Kidney (tissue), 22 donors: ENCODE measurements at regions of chr3 and their contacts with region 1.

Region 1: GRCh38 chr3:24773798-24774197 is 279.1 kb upstream of the THRB start:
- DNase-seq: peak; percentile 73 to 90 (median 79)
- H3K4me3 ChIP-seq: no peak overlapping the region
- H3K27ac ChIP-seq: no peak overlapping the region
- H3K4me1 ChIP-seq: no peaks in the 10 kb centered on the region
- H3K27me3 ChIP-seq: no peaks in the 10 kb centered on the region
- CTCF ChIP-seq: peak; percentile 88

Region 2: DNA sequence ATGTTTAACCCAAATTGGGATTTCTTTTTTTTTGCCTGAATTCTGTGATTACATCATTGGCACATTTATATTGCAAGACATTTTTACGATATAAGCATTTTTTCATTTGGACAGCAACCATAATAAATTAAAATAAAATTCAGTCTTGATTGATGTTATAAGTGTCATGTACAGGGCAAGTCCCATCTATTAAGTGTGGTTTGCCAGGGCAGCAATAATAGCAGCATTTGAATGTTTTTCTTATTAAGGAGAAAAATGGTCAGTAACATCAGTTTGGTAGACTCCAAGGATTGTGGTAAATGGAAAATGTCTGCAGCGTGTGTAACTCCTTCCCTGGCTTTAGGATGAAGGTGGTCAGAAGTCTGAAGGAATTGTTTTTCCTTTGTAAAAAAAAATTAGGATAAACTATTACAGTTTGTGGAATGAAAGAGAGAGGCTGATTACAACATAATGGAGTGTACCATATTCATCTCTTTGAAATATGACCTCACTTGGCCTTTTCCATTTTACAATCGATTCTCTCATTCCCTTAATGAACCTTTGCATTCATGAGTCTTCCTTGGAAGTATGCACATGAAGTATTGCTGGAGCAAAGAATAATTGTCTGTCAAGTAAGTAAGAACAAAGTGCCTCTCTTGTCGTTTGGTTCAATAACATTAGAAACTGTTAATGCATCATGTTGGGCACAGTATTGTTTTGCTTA is 126.3 kb after region 1 on chr3:
- intact Hi-C with region 1: no loop called
- DNase-seq: no peak
- H3K4me3 ChIP-seq: no peak overlapping the region
- H3K27ac ChIP-seq: no peak overlapping the region
- H3K4me1 ChIP-seq: no peaks in the 10 kb centered on the region
- H3K27me3 ChIP-seq: no peaks in the 10 kb centered on the region
- CTCF ChIP-seq: no peak

Region 3: DNA sequence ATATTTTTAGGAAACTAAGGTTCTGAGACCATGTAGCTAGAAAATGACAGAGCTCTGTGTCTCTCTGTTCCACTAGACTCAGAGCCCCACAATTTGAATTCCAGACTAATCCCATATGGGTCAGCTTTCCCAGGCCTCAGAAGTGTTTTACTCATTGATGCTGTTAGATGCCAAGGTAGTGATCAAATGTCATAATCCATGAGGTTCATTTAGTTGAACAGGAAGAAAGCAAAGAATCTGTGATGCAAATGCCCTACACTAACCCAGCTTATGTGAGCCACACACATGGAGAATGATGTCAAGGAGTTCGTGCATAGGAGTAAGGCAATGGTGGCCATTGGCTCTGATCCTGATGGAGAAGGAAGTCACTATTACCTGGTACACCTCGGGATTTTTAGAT is 290.9 kb after region 1 on chr3:
- intact Hi-C with region 1: no loop called
- DNase-seq: no peak
- H3K4me3 ChIP-seq: no peak overlapping the region
- H3K27ac ChIP-seq: no peak overlapping the region
- H3K4me1 ChIP-seq: no peaks in the 10 kb centered on the region
- H3K27me3 ChIP-seq: no peaks in the 10 kb centered on the region
- CTCF ChIP-seq: no peak

Region 4: DNA sequence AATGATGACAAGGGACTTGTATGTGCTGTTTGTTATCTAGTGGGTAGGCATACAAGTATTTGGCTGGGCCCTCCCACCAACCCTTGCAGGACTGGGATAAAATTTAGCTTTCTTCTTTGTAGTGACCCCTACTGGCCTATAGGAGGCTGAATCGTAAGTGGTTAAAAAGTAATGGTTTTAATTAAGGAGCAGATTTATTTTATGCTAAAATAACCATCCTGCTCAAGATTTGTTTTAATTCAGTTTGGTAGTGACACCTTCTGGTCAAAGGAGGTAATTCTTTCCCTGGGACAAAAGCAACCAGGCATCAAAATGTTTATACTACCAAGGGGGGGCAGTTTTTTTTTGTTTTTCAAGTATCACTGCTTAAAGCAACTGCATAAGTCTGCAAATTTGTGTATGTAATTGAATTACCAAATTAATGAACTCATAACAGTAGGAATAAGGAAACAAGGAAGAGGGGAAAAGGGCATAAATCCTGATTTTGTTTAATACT is 820.3 kb after region 1 on chr3:
- intact Hi-C with region 1: loop called (anchors 10 kb)
- DNase-seq: peak in 4 of 5 donors; percentile 32 to 91 (median 74)
- H3K4me3 ChIP-seq: no peak overlapping the region
- H3K27ac ChIP-seq: no peak overlapping the region
- H3K4me1 ChIP-seq: peaks cover 7 to 20% (median 17%) of the 10 kb centered on the region in 3 donors
- H3K27me3 ChIP-seq: no peaks in the 10 kb centered on the region
- CTCF ChIP-seq: peak; percentile 71